Activated naive CD4-positive, alpha-beta T cell treated with anti-CD3 and anti-CD28 coated beads for 36 hours (primary cell): ENCODE measurements at regions of chr12 and their contacts with region 1.

Region 1: GRCh38 chr12:12376646-12377448 is 20.0 kb downstream of the BORCS5 start:
- DNase-seq: peak; percentile 33
- H3K4me3 Mint-ChIP-seq: no peak overlapping the region
- H3K27ac Mint-ChIP-seq: peak overlapping the region; percentile 30
- H3K4me1 Mint-ChIP-seq: peaks cover 37% of the 10 kb centered on the region
- H3K27me3 Mint-ChIP-seq: no peaks in the 10 kb centered on the region

Region 2: GRCh38 chr12:12305568-12306300 is 71.1 kb before region 1 on chr12:
- CTCF ChIA-PET with region 1: no interaction called
- intact Hi-C with region 1: no loop called
- DNase-seq: no peak
- H3K4me3 Mint-ChIP-seq: no peak overlapping the region
- H3K27ac Mint-ChIP-seq: no peak overlapping the region
- H3K4me1 Mint-ChIP-seq: no peaks in the 10 kb centered on the region
- H3K27me3 Mint-ChIP-seq: no peaks in the 10 kb centered on the region

Region 3: DNA sequence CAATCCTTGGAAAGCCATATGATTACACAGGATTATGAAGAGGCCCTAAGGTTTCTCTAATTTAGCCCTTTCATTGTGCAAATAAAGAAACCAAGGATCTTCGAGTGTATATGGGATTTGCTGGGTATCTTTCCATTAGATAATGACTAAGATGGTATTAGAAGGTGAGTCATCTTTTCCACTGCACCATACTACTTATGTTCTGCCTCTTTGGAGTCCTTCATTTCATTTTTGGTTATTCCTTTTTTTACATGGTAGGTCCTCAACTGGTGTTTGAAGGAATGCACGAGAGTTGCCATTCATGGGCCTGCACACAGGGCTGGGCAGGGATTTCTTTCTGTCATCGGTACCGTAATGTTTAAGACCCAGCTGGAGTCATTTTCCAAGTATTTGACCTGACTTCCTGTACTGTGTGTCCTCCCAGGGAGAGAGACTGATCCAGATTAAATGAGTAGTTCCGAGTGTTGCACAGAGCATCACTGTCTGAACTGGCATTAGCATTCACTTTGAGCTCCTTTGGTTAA is 65.8 kb after region 1 on chr12:
- CTCF ChIA-PET with region 1: interaction called, 3 read pairs
- intact Hi-C with region 1: loop called (anchors 2 kb)
- DNase-seq: no peak
- H3K4me3 Mint-ChIP-seq: peak overlapping the region; percentile 25
- H3K27ac Mint-ChIP-seq: peak overlapping the region; percentile 91
- H3K4me1 Mint-ChIP-seq: peaks cover 58% of the 10 kb centered on the region
- H3K27me3 Mint-ChIP-seq: no peaks in the 10 kb centered on the region

Region 4: GRCh38 chr12:12474931-12475795 is 98.3 kb after region 1 on chr12:
- CTCF ChIA-PET with region 1: interaction called, 5 read pairs
- intact Hi-C with region 1: loop called (anchors 2 kb)
- DNase-seq: peak; percentile 71
- H3K4me3 Mint-ChIP-seq: peak overlapping the region; percentile 19
- H3K27ac Mint-ChIP-seq: peak overlapping the region; percentile 95
- H3K4me1 Mint-ChIP-seq: peaks cover 52% of the 10 kb centered on the region
- H3K27me3 Mint-ChIP-seq: no peaks in the 10 kb centered on the region

Region 5: DNA sequence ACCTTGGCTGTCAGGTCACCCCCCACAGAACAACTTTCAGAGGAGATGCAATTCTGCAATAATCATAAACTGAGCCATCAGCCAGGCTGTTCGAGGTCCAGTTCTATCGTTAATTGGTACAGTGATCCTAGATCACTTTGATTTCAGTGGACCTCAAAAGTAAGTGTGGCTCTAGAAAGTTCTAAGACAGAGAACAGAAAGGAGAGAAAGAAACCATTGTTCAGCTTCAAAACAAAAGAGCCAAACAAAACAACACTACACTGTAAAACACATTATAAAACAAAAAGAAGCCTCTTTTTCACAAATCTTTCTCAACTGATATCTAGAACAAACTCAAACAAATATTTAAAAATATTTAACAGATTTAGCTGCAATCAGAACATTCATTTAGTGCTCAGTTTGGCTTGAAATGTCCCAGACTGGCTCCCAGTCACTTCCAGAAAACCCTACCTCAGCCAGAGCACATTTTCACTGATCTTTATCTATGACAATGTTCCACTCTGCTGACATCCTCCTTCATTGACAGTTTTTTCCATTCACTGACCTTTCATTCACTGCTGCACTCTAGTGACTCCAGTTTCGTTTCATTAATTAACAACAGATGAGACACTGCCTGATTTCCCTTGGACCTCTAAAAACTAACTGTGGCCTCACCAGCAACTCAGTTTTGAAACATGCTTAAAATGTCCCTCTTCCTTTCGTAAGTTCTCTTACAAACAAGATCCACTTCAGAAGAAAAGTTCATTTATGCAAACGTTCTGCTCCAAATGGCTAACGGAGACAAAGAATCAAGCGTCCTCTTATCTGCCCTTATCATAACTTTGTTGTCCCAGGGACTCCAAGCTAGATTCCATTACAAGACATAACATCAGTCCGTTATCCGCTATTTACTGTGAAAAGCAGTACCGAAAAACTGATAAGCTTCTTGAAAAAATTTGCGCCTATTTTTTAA is 129.0 kb after region 1 on chr12:
- CTCF ChIA-PET with region 1: interaction called, 5 read pairs
- intact Hi-C with region 1: loop called (anchors 1 kb)
- DNase-seq: peak; percentile 61
- H3K4me3 Mint-ChIP-seq: peak overlapping the region; percentile 25
- H3K27ac Mint-ChIP-seq: peak overlapping the region; percentile 93
- H3K4me1 Mint-ChIP-seq: peaks cover 80% of the 10 kb centered on the region
- H3K27me3 Mint-ChIP-seq: no peaks in the 10 kb centered on the region

Region 6: GRCh38 chr12:12661086-12661485 is 284.2 kb after region 1 on chr12:
- CTCF ChIA-PET with region 1: interaction called, 46 read pairs
- intact Hi-C with region 1: loop called (anchors 1 kb)
- DNase-seq: no peak
- H3K4me3 Mint-ChIP-seq: no peak overlapping the region
- H3K27ac Mint-ChIP-seq: no peak overlapping the region
- H3K4me1 Mint-ChIP-seq: peaks cover under 1% of the 10 kb centered on the region
- H3K27me3 Mint-ChIP-seq: no peaks in the 10 kb centered on the region

Region 7: GRCh38 chr12:12736759-12737676 is 360.2 kb after region 1 on chr12:
- CTCF ChIA-PET with region 1: interaction called, 30 read pairs
- intact Hi-C with region 1: loop called (anchors 1 kb)
- DNase-seq: peak; percentile 55
- H3K4me3 Mint-ChIP-seq: peak overlapping the region; percentile 47
- H3K27ac Mint-ChIP-seq: peak overlapping the region; percentile 59
- H3K4me1 Mint-ChIP-seq: peaks cover 27% of the 10 kb centered on the region
- H3K27me3 Mint-ChIP-seq: no peaks in the 10 kb centered on the region